HepG2 (cell line): ENCODE measurements at regions of chr1 and their contacts with region 1.

Region 1: GRCh38 chr1:166884040-166884642 is 8.1 kb upstream of the TADA1 start:
- DNase-seq: no peak
- ATAC-seq: peak; percentile 97
- H3K4me3 ChIP-seq: no peak overlapping the region
- H3K27ac ChIP-seq: no peak overlapping the region
- H3K4me1 ChIP-seq: no peaks in the 10 kb centered on the region
- H3K27me3 ChIP-seq: peaks cover 0 to 14% of the 10 kb centered on the region in 2 experiments; a peak in 3 of 5 replicates
- CTCF ChIP-seq: peak; percentile 66
- EP300 ChIP-seq: no peak
- POLR2A ChIP-seq: no peak
- RAD21 ChIP-seq: peak; percentile 34; the same call in 1 of the 2 replicates

Region 2: GRCh38 chr1:167105271-167106118 is 221.4 kb after region 1 on chr1:
- CTCF ChIA-PET with region 1: no interaction called
- POLR2A ChIA-PET with region 1: no interaction called
- in situ Hi-C with region 1: no loop called
- intact Hi-C with region 1: no loop called
- DNase-seq: no peak
- ATAC-seq: no peak
- H3K4me3 ChIP-seq: no peak overlapping the region
- H3K27ac ChIP-seq: no peak overlapping the region
- H3K4me1 ChIP-seq: peaks cover 9% of the 10 kb centered on the region; the same call in 1 of the 2 replicates
- H3K27me3 ChIP-seq: peaks cover 0 to 36% of the 10 kb centered on the region in 2 experiments; a peak in 3 of 5 replicates
- CTCF ChIP-seq: no peak
- EP300 ChIP-seq: no peak
- POLR2A ChIP-seq: no peak
- RAD21 ChIP-seq: no peak

Region 3: GRCh38 chr1:167442124-167442848 is 558.1 kb after region 1 on chr1:
- CTCF ChIA-PET with region 1: no interaction called
- POLR2A ChIA-PET with region 1: no interaction called
- in situ Hi-C with region 1: loop called (anchors 10 kb)
- intact Hi-C with region 1: no loop called
- DNase-seq: peak; percentile 70
- ATAC-seq: peak; percentile 95
- H3K4me3 ChIP-seq: peak overlapping the region in 1 of 3 experiments; percentile 36; a peak in 1 of 6 replicates
- H3K27ac ChIP-seq: no peak overlapping the region
- H3K4me1 ChIP-seq: peaks cover 20% of the 10 kb centered on the region
- H3K27me3 ChIP-seq: peaks cover 0 to 32% of the 10 kb centered on the region in 2 experiments; a peak in 2 of 5 replicates
- CTCF ChIP-seq: peak; percentile 97
- EP300 ChIP-seq: no peak
- POLR2A ChIP-seq: no peak
- RAD21 ChIP-seq: peak; percentile 87